ENCODE measurements at regions of chr1 and their contacts with region 1.

Region 1: GRCh38 chr1:90729504-90730242 is 12.6 kb upstream of the BARHL2 start:
- DNase-seq: peak; percentile 39
- ATAC-seq: peak; percentile 58
- H3K4me3 Mint-ChIP-seq: peak overlapping the region; percentile 44
- H3K27ac Mint-ChIP-seq: no peak overlapping the region
- H3K4me1 Mint-ChIP-seq: peaks cover 44% of the 10 kb centered on the region
- H3K27me3 Mint-ChIP-seq: peaks cover 82% of the 10 kb centered on the region
- CTCF ChIP-seq: peak; percentile 90

Region 2: DNA sequence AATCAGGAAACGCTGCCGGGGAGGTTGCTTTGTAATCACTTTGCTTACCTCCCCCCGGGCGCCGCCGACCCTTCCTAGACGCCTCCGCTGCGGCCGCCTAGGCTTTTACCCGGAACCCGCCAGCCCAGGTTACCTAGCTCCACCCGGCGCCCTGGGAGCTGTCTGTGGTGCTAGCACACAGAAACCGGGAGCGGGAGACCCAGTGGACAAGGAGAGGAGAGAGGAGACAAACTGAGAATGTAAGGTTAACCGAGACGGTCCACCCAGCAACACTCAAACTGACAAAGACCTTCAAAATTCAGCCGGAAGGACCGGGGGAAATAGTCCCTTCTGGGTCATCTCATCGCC is 22.3 kb before region 1 on chr1:
- CTCF ChIA-PET with region 1: interaction called, 11 read pairs
- POLR2A ChIA-PET with region 1: no interaction called
- intact Hi-C with region 1: no loop called
- DNase-seq: peak; percentile 34
- ATAC-seq: no peak
- H3K4me3 Mint-ChIP-seq: peak overlapping the region; percentile 6
- H3K27ac Mint-ChIP-seq: no peak overlapping the region
- H3K4me1 Mint-ChIP-seq: peaks cover 7% of the 10 kb centered on the region
- H3K27me3 Mint-ChIP-seq: peaks cover 75% of the 10 kb centered on the region
- CTCF ChIP-seq: no peak

Region 3: GRCh38 chr1:90834886-90835660 is 105.4 kb after region 1 on chr1:
- CTCF ChIA-PET with region 1: interaction called, 13 read pairs
- POLR2A ChIA-PET with region 1: no interaction called
- intact Hi-C with region 1: loop called (anchors 5 kb)
- DNase-seq: peak; percentile 24
- ATAC-seq: peak; percentile 47
- H3K4me3 Mint-ChIP-seq: no peak overlapping the region
- H3K27ac Mint-ChIP-seq: no peak overlapping the region
- H3K4me1 Mint-ChIP-seq: peaks cover 17% of the 10 kb centered on the region
- H3K27me3 Mint-ChIP-seq: peaks cover 80% of the 10 kb centered on the region
- CTCF ChIP-seq: no peak

Region 4: DNA sequence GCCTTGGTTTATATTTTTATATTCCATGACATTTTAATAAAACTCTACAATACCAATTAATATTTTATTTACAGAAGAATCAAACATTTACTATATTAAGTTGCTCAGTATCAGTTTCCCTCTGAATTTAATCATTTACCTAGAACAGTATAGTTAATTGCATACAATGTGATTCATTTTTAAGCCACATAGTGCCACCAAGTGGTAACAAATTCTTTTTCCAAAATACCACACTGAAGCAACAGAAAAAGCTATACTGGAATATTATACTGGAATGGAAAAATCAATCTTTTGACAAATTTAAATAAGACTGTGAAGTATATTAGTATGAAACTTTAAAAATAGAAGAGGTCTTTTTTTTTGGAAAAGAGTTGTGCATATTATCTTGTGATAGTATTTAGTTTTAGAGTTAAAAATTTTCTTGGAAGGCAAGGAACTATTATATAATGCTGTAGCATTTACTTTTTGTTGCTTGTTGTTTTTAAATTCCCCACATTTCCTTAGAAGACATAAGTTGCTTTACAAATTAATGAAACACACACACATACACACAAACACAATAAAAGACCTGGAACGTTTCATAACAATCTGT is 234.9 kb after region 1 on chr1:
- CTCF ChIA-PET with region 1: interaction called, 3 read pairs
- POLR2A ChIA-PET with region 1: no interaction called
- intact Hi-C with region 1: loop called (anchors 5 kb)
- DNase-seq: no peak
- ATAC-seq: no peak
- H3K4me3 Mint-ChIP-seq: no peak overlapping the region
- H3K27ac Mint-ChIP-seq: peak overlapping the region; percentile 18
- H3K4me1 Mint-ChIP-seq: peaks cover 42% of the 10 kb centered on the region
- H3K27me3 Mint-ChIP-seq: no peaks in the 10 kb centered on the region
- CTCF ChIP-seq: peak; percentile 66

Measured in activated CD8-positive, alpha-beta T cell treated with anti-CD3 and anti-CD28 coated beads for 36 hours (primary cell).